ENCODE measurements at regions of chr3 and their contacts with region 1.

Region 1: GRCh38 chr3:22846566-22846965 is 356.6 kb upstream of the UBE2E2 start:
- DNase-seq: no peak
- ATAC-seq: no peak
- H3K4me3 ChIP-seq: no peak overlapping the region
- H3K27ac ChIP-seq: no peak overlapping the region
- H3K4me1 ChIP-seq: no peaks in the 10 kb centered on the region
- H3K27me3 ChIP-seq: no peaks in the 10 kb centered on the region
- CTCF ChIP-seq: no peak

Region 2: GRCh38 chr3:22795917-22796316 is 50.6 kb before region 1 on chr3:
- CTCF ChIA-PET with region 1: no interaction called
- POLR2A ChIA-PET with region 1: no interaction called
- intact Hi-C with region 1: no loop called
- DNase-seq: peak; percentile 22
- ATAC-seq: peak; percentile 38; the same call in 1 of the 2 replicates
- H3K4me3 ChIP-seq: no peak overlapping the region
- H3K27ac ChIP-seq: no peak overlapping the region
- H3K4me1 ChIP-seq: no peaks in the 10 kb centered on the region
- H3K27me3 ChIP-seq: peaks cover 28% of the 10 kb centered on the region
- CTCF ChIP-seq: peak; percentile 30; the same call in 1 of the 2 replicates

Region 3: GRCh38 chr3:22862111-22862510 is 15.5 kb after region 1 on chr3:
- CTCF ChIA-PET with region 1: interaction called, 11 read pairs
- POLR2A ChIA-PET with region 1: no interaction called
- intact Hi-C with region 1: no loop called
- DNase-seq: no peak
- ATAC-seq: no peak
- H3K4me3 ChIP-seq: no peak overlapping the region
- H3K27ac ChIP-seq: no peak overlapping the region
- H3K4me1 ChIP-seq: no peaks in the 10 kb centered on the region
- H3K27me3 ChIP-seq: no peaks in the 10 kb centered on the region
- CTCF ChIP-seq: peak; percentile 31; the same call in 1 of the 2 replicates

Region 4: GRCh38 chr3:23206366-23206765 is 359.8 kb after region 1 on chr3:
- CTCF ChIA-PET with region 1: no interaction called
- POLR2A ChIA-PET with region 1: no interaction called
- intact Hi-C with region 1: no loop called
- DNase-seq: no peak
- ATAC-seq: no peak
- H3K4me3 ChIP-seq: no peak overlapping the region
- H3K27ac ChIP-seq: no peak overlapping the region
- H3K4me1 ChIP-seq: peaks cover 12% of the 10 kb centered on the region
- H3K27me3 ChIP-seq: no peaks in the 10 kb centered on the region
- CTCF ChIP-seq: no peak